Dendritic cell treated with granulocyte-macrophage colony-stimulating factor and Interleukin-4, amounts not matched to agents 40 ng/mL and 50 ng/mL, for 4 days (primary cell): ENCODE measurements at regions of chr6 and their contacts with region 1.

Region 1: GRCh38 chr6:2353412-2354137 is 108.2 kb upstream of the GMDS start:
- H3K4me3 Mint-ChIP-seq: no peak overlapping the region
- H3K27ac Mint-ChIP-seq: no peak overlapping the region
- H3K4me1 Mint-ChIP-seq: no peaks in the 10 kb centered on the region
- H3K27me3 Mint-ChIP-seq: no peaks in the 10 kb centered on the region

Region 2: DNA sequence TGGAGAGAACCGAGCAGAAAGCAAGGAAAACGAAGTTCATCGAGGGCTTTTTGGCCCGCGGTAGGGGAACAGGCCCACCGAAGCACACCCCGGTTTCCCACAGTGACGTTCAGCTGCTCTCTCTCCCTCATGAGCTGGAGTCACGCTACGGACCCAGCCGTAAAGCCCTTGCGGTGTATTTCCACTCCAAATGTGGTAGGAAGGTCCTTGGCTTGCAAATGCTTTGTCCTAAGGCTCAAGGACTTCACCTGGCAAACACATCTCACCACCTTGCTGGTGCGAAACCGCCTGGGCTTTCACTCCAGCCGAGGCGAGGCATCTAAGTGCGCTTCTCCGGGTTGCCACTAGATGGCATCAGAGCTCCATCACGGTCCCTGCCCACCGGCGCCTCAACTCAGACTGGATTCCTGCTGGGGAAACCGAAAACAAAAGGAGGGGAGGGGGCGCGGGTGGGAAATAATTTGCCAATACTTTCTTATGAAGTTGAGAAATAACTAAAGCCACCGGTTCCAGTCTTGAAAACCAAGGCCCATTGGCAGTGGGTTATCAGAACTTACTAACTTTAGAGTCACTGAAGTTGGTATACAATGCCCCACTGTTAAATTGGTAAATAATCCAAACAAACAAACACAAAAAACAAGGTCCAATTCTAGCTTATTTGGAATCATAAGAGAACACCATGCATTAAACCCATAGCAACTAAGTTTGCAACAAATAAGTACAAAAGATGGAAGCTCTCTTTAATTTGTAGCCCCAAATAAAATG is 757.3 kb before region 1 on chr6:
- intact Hi-C with region 1: loop called (anchors 2 kb)
- H3K4me3 Mint-ChIP-seq: no peak overlapping the region
- H3K27ac Mint-ChIP-seq: no peak overlapping the region
- H3K4me1 Mint-ChIP-seq: peaks cover 4% of the 10 kb centered on the region
- H3K27me3 Mint-ChIP-seq: peaks cover 81% of the 10 kb centered on the region

Region 3: DNA sequence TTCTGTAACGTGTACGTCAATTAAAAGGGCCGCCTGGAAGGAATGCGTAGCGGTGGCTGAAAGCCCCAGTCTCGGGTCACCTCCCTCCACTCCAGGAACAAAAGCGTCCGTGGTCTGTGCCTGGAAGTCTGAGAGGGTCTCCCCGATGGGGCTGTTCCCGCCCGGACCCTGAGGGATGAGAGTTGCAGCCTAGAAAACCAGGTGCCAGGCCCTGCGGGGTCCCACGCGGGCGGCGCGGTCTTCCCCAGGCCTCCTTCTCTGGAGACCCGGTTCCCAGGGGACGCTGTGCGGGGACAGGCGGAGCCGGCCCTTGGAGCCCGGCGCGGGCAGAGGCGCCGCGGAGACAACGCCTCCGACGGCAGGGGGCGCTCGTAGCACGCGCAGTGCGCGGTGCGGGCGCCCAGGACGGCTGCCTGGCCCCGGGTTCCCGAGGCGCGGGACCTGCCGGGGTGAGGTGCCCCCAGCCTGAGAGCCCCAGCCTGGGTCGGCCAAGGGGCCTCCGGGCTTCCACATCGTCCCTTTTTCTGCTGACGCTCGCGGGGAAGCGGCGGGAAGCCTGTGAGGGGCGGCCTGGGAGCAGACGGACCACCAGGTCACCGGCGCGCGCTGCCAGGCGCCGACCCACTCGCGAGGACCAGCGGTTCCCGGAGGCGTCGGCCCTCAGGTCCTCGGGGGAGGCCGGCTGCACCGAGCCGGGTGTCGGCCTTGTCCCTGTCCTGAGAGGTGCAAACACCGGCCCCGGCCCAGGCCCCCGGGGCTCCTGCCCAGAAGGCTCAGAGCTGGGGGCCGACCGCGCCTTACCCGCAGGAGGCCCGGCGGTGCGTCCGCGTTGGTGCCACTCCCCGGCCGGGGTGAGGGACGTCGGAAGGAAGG is 749.2 kb before region 1 on chr6:
- intact Hi-C with region 1: loop called (anchors 1 kb)
- H3K4me3 Mint-ChIP-seq: peak overlapping the region; percentile 44
- H3K27ac Mint-ChIP-seq: no peak overlapping the region
- H3K4me1 Mint-ChIP-seq: peaks cover 39% of the 10 kb centered on the region
- H3K27me3 Mint-ChIP-seq: peaks cover 92% of the 10 kb centered on the region

Region 4: GRCh38 chr6:2103644-2104523 is 249.7 kb before region 1 on chr6:
- intact Hi-C with region 1: loop called (anchors 5 kb)
- H3K4me3 Mint-ChIP-seq: no peak overlapping the region
- H3K27ac Mint-ChIP-seq: no peak overlapping the region
- H3K4me1 Mint-ChIP-seq: peaks cover 7% of the 10 kb centered on the region
- H3K27me3 Mint-ChIP-seq: no peaks in the 10 kb centered on the region

Region 5: GRCh38 chr6:2209226-2209809 is 144.3 kb before region 1 on chr6:
- intact Hi-C with region 1: loop called (anchors 10 kb)
- H3K4me3 Mint-ChIP-seq: no peak overlapping the region
- H3K27ac Mint-ChIP-seq: no peak overlapping the region
- H3K4me1 Mint-ChIP-seq: no peaks in the 10 kb centered on the region
- H3K27me3 Mint-ChIP-seq: no peaks in the 10 kb centered on the region

Region 6: GRCh38 chr6:2245094-2245876 is 108.3 kb before region 1 on chr6 and contains the start of gene GMDS:
- intact Hi-C with region 1: no loop called
- H3K4me3 Mint-ChIP-seq: peak within 1 kb of the TSS; percentile 89
- H3K27ac Mint-ChIP-seq: peak within 1 kb of the TSS; percentile 95
- H3K4me1 Mint-ChIP-seq: peaks cover 51% of the 10 kb centered on the region
- H3K27me3 Mint-ChIP-seq: no peaks in the 10 kb centered on the region

Region 7: DNA sequence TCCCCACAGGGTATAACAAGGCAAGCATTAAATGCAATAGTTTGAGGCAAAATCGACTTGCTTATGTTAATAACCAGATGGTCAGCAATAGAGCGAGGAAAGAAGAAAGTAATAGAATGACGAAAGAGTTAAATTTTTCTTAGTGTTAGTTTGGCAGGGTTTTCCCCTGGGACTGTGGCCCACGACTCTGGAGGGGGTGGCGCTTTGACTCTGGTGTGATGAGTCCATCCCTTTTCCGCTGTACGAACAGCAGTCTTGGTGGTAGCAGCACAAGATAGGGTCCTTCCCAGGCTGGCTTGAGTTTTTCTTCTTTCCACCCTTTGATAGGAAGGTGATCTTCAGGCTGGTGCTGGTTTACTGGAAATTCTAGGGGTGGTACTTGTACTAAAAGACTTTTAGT is 38.9 kb before region 1 on chr6:
- intact Hi-C with region 1: no loop called
- H3K4me3 Mint-ChIP-seq: no peak overlapping the region
- H3K27ac Mint-ChIP-seq: no peak overlapping the region
- H3K4me1 Mint-ChIP-seq: peaks cover 6% of the 10 kb centered on the region
- H3K27me3 Mint-ChIP-seq: no peaks in the 10 kb centered on the region

Region 8: GRCh38 chr6:2432239-2432638 is 78.7 kb after region 1 on chr6:
- intact Hi-C with region 1: no loop called
- H3K4me3 Mint-ChIP-seq: no peak overlapping the region
- H3K27ac Mint-ChIP-seq: no peak overlapping the region
- H3K4me1 Mint-ChIP-seq: no peaks in the 10 kb centered on the region
- H3K27me3 Mint-ChIP-seq: no peaks in the 10 kb centered on the region

Region 9: DNA sequence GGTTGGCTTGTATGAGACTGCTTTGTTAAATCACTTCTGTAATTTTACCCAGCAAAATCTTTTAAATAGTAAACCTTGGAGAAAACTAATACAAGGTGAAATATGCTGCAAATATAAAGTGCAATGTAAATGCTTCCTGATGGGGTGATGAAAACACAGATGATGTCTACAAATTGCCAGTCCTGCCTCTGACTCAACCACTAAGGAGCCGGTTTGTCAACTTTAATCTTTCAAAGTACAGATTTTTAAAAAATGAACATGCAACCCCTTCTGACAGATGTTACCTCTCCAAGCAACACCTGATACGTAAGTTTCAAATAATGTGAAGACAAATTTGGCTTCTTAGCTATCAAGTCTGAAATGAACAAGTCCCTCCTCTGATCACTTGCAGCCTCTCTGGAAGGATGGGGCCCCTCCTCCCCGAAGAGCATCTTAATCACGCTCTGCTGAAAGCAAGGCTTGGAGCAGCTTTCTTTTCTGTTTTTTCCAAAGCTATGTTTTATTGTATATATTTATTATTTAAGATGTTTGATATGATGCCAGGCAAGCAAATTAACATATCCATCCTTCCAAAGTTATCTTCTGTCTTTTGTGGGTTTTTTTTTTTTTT is 201.2 kb after region 1 on chr6:
- intact Hi-C with region 1: no loop called
- H3K4me3 Mint-ChIP-seq: no peak overlapping the region
- H3K27ac Mint-ChIP-seq: no peak overlapping the region
- H3K4me1 Mint-ChIP-seq: peaks cover 13% of the 10 kb centered on the region
- H3K27me3 Mint-ChIP-seq: peaks cover 27% of the 10 kb centered on the region

Region 10: GRCh38 chr6:2634139-2634964 is 280.8 kb after region 1 on chr6:
- intact Hi-C with region 1: loop called (anchors 10 kb)
- H3K4me3 Mint-ChIP-seq: peak overlapping the region; percentile 70
- H3K27ac Mint-ChIP-seq: no peak overlapping the region
- H3K4me1 Mint-ChIP-seq: no peaks in the 10 kb centered on the region
- H3K27me3 Mint-ChIP-seq: peaks cover 28% of the 10 kb centered on the region